ENCODE measurements at regions of chr5 and their contacts with region 1.

Region 1: GRCh38 chr5:38556599-38557305 is at the start of gene LIFR:
- DNase-seq: peak; percentile 86
- ATAC-seq: peak; percentile 81
- H3K4me3 ChIP-seq: peak within 1 kb of the TSS; percentile 84
- H3K27ac ChIP-seq: peak within 1 kb of the TSS; percentile 54
- H3K4me1 ChIP-seq: peaks cover 15% of the 10 kb centered on the region; the same call in 1 of the 2 replicates
- H3K27me3 ChIP-seq: no peaks in the 10 kb centered on the region
- CTCF ChIP-seq: no peak
- total RNA-seq, gene LIFR: 10.4 and 15.7 TPM in 2 replicates

Region 2: DNA sequence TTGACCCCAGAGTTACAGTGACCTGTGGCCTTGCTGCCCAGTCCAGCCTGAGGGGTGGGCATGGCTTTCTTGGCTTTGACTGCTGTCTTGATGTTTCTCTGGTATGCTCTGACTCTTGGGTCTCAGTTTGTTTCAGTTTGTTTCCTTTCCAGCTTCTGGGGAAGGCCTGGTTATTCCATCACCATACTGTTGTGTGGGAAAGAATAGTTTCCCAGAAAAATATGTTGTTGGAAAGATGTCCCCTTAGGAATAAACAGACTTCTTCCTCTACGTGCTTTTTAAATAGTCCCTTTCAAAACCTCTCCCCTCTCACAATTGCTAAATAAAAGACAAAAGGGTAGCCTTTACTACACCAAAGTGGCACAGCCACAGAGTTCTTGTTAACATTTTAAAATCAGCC is 248.9 kb before region 1 on chr5:
- CTCF ChIA-PET with region 1: no interaction called
- POLR2A ChIA-PET with region 1: no interaction called
- intact Hi-C with region 1: no loop called
- DNase-seq: no peak
- ATAC-seq: no peak
- H3K4me3 ChIP-seq: no peak overlapping the region
- H3K27ac ChIP-seq: no peak overlapping the region
- H3K4me1 ChIP-seq: no peaks in the 10 kb centered on the region
- H3K27me3 ChIP-seq: peaks cover 29% of the 10 kb centered on the region
- CTCF ChIP-seq: no peak

Region 3: GRCh38 chr5:38576442-38576841 is 19.7 kb after region 1 on chr5:
- CTCF ChIA-PET with region 1: no interaction called
- POLR2A ChIA-PET with region 1: no interaction called
- intact Hi-C with region 1: no loop called
- DNase-seq: peak; percentile 66
- ATAC-seq: peak; percentile 94
- H3K4me3 ChIP-seq: no peak overlapping the region
- H3K27ac ChIP-seq: no peak overlapping the region
- H3K4me1 ChIP-seq: peaks cover 10% of the 10 kb centered on the region
- H3K27me3 ChIP-seq: no peaks in the 10 kb centered on the region
- CTCF ChIP-seq: no peak

Region 4: DNA sequence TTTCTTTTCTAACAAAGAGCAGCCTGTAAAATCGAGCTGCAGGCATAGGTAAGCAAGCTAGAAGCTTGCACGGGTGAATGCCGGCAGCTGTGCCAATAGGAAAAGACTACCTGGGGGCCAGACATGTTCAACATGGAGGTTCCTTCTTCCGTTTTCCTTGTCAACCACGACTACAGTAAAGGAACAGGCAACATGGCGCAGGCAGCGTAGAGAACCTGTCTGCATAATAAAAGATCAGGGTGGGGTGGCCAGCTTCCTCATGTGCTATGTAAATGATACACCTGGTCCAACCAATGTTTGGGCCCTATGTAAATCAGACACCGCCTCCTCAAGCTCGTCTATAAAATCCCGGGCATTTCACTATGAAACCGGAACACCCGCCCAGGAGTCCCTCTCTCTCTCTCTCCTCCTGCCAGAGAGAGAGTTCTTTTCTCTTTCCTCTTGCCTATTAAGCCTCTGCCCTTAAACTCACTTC is 103.5 kb after region 1 on chr5:
- CTCF ChIA-PET with region 1: no interaction called
- POLR2A ChIA-PET with region 1: no interaction called
- intact Hi-C with region 1: loop called (anchors 1 kb)
- DNase-seq: peak; percentile 98
- ATAC-seq: peak; percentile 100
- H3K4me3 ChIP-seq: peak overlapping the region; percentile 69
- H3K27ac ChIP-seq: peak overlapping the region; percentile 74
- H3K4me1 ChIP-seq: peaks cover 10% of the 10 kb centered on the region
- H3K27me3 ChIP-seq: no peaks in the 10 kb centered on the region
- CTCF ChIP-seq: no peak

Region 5: DNA sequence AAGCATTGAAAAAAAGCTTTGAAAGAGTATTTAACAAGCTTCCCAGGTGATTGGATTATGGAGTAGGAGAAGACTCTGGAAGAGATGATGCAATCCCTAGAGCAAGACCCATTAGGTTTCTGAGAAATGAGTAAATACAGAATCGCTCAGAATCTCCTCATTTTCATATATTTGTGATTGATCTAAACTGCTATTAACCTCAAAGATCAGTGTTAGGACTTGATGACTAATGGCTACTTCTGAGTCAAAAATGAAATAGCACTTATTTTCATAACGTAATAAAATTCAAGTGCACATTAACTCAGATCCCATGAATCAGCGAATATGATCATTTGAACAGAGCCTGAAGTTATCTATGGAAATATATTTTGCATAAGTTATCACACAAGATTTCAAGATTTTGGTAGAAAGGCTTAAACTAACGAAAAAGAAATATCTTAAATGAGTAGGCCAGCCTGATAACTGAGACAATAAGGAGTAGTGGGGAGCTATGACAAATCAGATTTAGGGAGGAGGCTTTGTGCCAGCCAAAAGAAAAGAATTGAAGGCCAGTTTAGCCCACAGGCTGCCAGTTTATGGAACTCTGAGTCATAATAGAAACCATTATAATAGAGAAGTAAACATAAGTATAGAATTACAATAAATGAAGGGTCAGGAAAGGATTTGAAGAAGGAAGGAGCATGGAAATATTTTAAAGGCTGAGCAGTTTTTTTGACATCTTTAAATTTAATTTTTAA is 182.4 kb after region 1 on chr5:
- CTCF ChIA-PET with region 1: no interaction called
- POLR2A ChIA-PET with region 1: no interaction called
- intact Hi-C with region 1: loop called (anchors 5 kb)
- DNase-seq: peak; percentile 95
- ATAC-seq: peak; percentile 97
- H3K4me3 ChIP-seq: peak overlapping the region; percentile 20; the same call in 1 of the 2 replicates
- H3K27ac ChIP-seq: peak overlapping the region; percentile 83
- H3K4me1 ChIP-seq: peaks cover 21% of the 10 kb centered on the region
- H3K27me3 ChIP-seq: no peaks in the 10 kb centered on the region
- CTCF ChIP-seq: no peak

Region 6: GRCh38 chr5:38789134-38789533 is 232.4 kb after region 1 on chr5:
- CTCF ChIA-PET with region 1: no interaction called
- POLR2A ChIA-PET with region 1: no interaction called
- intact Hi-C with region 1: loop called (anchors 1 kb)
- DNase-seq: peak; percentile 96
- ATAC-seq: peak; percentile 96
- H3K4me3 ChIP-seq: no peak overlapping the region
- H3K27ac ChIP-seq: peak overlapping the region; percentile 77
- H3K4me1 ChIP-seq: peaks cover 35% of the 10 kb centered on the region
- H3K27me3 ChIP-seq: no peaks in the 10 kb centered on the region
- CTCF ChIP-seq: no peak